H1 (cell line): ENCODE measurements at regions of chr11 and their contacts with region 1.

Region 1: GRCh38 chr11:2532704-2533586 is 88.1 kb downstream of the KCNQ1 start:
- DNase-seq: peak; percentile 96 to 99
- H3K4me3 ChIP-seq: no peak overlapping the region
- H3K27ac ChIP-seq: peak overlapping the region; percentile 4; the same call in 1 of the 2 replicates
- H3K4me1 ChIP-seq: peaks cover 4 to 16% (median 10%) of the 10 kb centered on the region in 4 experiments
- H3K27me3 ChIP-seq: peaks cover 1 to 40% (median 14%) of the 10 kb centered on the region in 4 experiments; a peak in 6 of 7 replicates
- CTCF ChIP-seq: peak in 2 of 3 experiments; percentile 99 to 100; a peak in 3 of 4 replicates
- EP300 ChIP-seq: peak in 1 of 2 experiments; percentile 81; a peak in 1 of 3 replicates
- POLR2A ChIP-seq: no peak
- RAD21 ChIP-seq: peak; percentile 99 to 100

Region 2: DNA sequence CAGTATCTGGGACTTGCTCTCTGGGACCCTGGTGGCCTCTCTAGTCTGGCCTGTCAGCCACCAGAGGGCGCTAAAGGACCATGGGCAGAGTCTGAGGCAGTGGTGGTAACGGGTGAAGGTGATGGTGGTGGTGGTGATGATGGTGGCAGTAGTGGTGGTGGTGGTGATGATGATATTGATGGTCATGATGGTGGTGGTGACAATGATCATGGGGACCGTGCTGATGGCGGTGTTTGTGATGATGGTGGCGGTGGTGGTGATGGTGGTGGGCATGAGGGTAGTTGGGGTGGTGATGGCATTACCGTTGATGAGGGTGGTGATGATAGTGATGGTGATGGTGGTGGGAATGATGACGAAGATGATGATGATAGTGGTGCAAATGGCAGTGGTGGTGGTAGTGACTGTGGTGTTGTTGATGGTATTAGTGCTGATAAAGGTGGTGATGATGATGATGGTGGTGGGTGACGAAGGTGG is 104.6 kb before region 1 on chr11:
- CTCF ChIA-PET with region 1: interaction called, 359 read pairs
- POLR2A ChIA-PET with region 1: interaction called, 5 read pairs
- DNase-seq: peak in 1 of 2 experiments; percentile 93
- H3K4me3 ChIP-seq: no peak overlapping the region
- H3K27ac ChIP-seq: no peak overlapping the region
- H3K4me1 ChIP-seq: no peaks in the 10 kb centered on the region
- H3K27me3 ChIP-seq: peaks cover 0 to 10% (median 0%) of the 10 kb centered on the region in 4 experiments; a peak in 1 of 7 replicates
- CTCF ChIP-seq: peak in 2 of 3 experiments; percentile 94 to 97; a peak in 3 of 4 replicates
- EP300 ChIP-seq: no peak
- POLR2A ChIP-seq: no peak
- RAD21 ChIP-seq: peak; percentile 99

Region 3: GRCh38 chr11:2462908-2463765 is 69.8 kb before region 1 on chr11:
- CTCF ChIA-PET with region 1: interaction called, 14 read pairs
- POLR2A ChIA-PET with region 1: no interaction called
- DNase-seq: no peak
- H3K4me3 ChIP-seq: no peak overlapping the region
- H3K27ac ChIP-seq: no peak overlapping the region
- H3K4me1 ChIP-seq: no peaks in the 10 kb centered on the region
- H3K27me3 ChIP-seq: peaks cover 0 to 27% (median 9%) of the 10 kb centered on the region in 4 experiments; a peak in 6 of 7 replicates
- CTCF ChIP-seq: no peak
- EP300 ChIP-seq: no peak
- POLR2A ChIP-seq: no peak
- RAD21 ChIP-seq: no peak

Region 4: GRCh38 chr11:2519862-2520735 is 12.8 kb before region 1 on chr11:
- CTCF ChIA-PET with region 1: interaction called, 50 read pairs
- POLR2A ChIA-PET with region 1: no interaction called
- DNase-seq: no peak
- H3K4me3 ChIP-seq: no peak overlapping the region
- H3K27ac ChIP-seq: no peak overlapping the region
- H3K4me1 ChIP-seq: no peaks in the 10 kb centered on the region
- H3K27me3 ChIP-seq: peaks cover 0 to 17% (median 3%) of the 10 kb centered on the region in 4 experiments; a peak in 4 of 7 replicates
- CTCF ChIP-seq: no peak
- EP300 ChIP-seq: no peak
- POLR2A ChIP-seq: no peak
- RAD21 ChIP-seq: no peak

Region 5: DNA sequence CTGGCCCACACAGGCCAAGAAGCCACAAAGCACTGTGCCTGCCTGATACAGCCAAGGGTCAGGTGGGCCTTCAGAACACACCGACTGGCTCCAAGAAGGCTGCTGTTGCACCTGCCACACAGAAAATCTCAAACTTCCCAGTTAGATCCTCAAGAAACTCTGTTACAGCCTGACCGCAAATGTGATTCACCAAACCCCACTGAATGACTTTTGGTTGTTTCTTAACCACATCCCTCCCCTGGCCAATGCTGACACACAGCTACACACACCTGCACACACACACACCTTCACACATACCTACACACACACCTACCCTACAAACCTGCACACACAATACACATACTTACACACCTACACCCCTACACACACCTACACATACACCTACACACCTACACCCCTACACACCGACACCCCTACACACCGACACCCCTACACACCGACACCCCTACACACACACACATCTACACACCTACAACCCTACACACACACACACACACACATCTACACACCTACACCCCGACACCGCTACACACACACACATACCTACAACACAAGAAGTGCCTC is 321.1 kb after region 1 on chr11:
- CTCF ChIA-PET with region 1: interaction called, 14 read pairs
- POLR2A ChIA-PET with region 1: no interaction called
- DNase-seq: no peak
- H3K4me3 ChIP-seq: no peak overlapping the region
- H3K27ac ChIP-seq: no peak overlapping the region
- H3K4me1 ChIP-seq: peaks cover 0 to 7% (median 3%) of the 10 kb centered on the region in 4 experiments; a peak in 5 of 7 replicates
- H3K27me3 ChIP-seq: peaks cover 0 to 23% (median 11%) of the 10 kb centered on the region in 4 experiments; a peak in 4 of 7 replicates
- CTCF ChIP-seq: no peak
- EP300 ChIP-seq: no peak
- POLR2A ChIP-seq: no peak
- RAD21 ChIP-seq: no peak

Region 6: GRCh38 chr11:2885676-2886081 is 352.7 kb after region 1 on chr11 and contains the start of gene CDKN1C:
- CTCF ChIA-PET with region 1: interaction called, 521 read pairs
- POLR2A ChIA-PET with region 1: interaction called, 18 read pairs
- DNase-seq: peak; percentile 53 to 87
- H3K4me3 ChIP-seq: peak within 1 kb of the TSS; percentile 52 to 75 (median 56)
- H3K27ac ChIP-seq: no peak within 1 kb of the TSS
- H3K4me1 ChIP-seq: peaks cover 0 to 29% (median 23%) of the 10 kb centered on the region in 4 experiments; a peak in 6 of 7 replicates
- H3K27me3 ChIP-seq: peaks cover 2 to 79% (median 52%) of the 10 kb centered on the region in 4 experiments
- CTCF ChIP-seq: no peak
- EP300 ChIP-seq: no peak
- POLR2A ChIP-seq: peak in 1 of 2 experiments; percentile 90; a peak in 2 of 3 replicates
- RAD21 ChIP-seq: peak in 1 of 2 experiments; percentile 5; a peak in 1 of 4 replicates
- total RNA-seq, gene CDKN1C: 12.8 and 16.2 TPM in 2 replicates

Region 7: DNA sequence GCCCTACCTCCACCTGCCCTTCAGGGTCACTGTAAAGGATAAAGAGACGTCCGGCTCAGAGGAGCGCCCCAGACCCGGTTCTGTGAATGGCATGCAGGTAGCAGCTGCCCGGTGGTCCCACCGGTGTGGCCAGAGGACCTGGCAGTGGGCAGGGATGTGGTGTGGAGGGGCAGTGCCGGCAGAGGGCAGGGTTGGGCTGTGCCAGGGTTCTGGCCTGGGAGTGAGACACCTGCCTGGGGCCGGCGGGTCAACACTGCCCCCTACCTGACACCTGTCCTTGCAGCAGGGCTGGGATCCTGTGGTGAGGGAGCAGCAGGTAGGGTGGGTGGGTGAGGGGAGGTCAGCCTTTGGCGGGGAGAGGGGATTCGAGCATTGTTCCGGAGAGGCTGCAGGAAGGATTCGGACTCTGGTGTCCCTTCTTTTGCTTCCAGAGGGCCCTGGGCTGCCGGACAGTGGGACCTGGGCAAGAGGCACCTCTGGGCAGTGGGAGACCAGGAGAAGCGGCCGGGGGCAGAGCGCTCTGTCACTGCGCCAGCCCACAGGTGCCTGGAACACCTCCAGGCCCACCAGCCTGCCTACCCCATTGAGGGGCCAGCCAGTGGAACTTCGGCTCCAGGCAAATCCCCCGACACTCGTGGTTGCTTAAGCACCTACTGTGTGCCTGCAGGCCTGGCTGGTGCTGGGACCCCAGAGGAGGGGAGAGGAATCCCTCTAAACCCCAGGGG is 397.9 kb after region 1 on chr11:
- CTCF ChIA-PET with region 1: interaction called, 24 read pairs
- POLR2A ChIA-PET with region 1: interaction called, 10 read pairs
- DNase-seq: peak; percentile 83 to 97
- H3K4me3 ChIP-seq: peak overlapping the region in 3 of 4 experiments; percentile 26 to 56 (median 38); a peak in 6 of 8 replicates
- H3K27ac ChIP-seq: no peak overlapping the region
- H3K4me1 ChIP-seq: peaks cover 0 to 13% (median 5%) of the 10 kb centered on the region in 4 experiments; a peak in 6 of 7 replicates
- H3K27me3 ChIP-seq: peaks cover 25 to 39% (median 37%) of the 10 kb centered on the region in 4 experiments
- CTCF ChIP-seq: peak in 2 of 3 experiments; percentile 96 to 100; a peak in 3 of 4 replicates
- EP300 ChIP-seq: peak in 1 of 2 experiments; percentile 60; a peak in 1 of 3 replicates
- POLR2A ChIP-seq: no peak
- RAD21 ChIP-seq: peak; percentile 93